Heart left ventricle (tissue), 16 donors: ENCODE measurements at regions of chr3 and their contacts with region 1.

Region 1: GRCh38 chr3:33798411-33799201 is at the start of gene PDCD6IP:
- DNase-seq: peak; percentile 93 to 98 (median 95)
- ATAC-seq: peak; percentile 93 to 96 (median 96)
- H3K4me3 ChIP-seq: peak within 1 kb of the TSS; percentile 56 to 98 (median 86)
- H3K27ac ChIP-seq: peak within 1 kb of the TSS; percentile 56 to 98 (median 94)
- H3K4me1 ChIP-seq: peaks cover 3 to 53% (median 39%) of the 10 kb centered on the region in 12 donors
- H3K27me3 ChIP-seq: no peaks in the 10 kb centered on the region
- CTCF ChIP-seq: peak in 6 of 12 donors; percentile 9 to 37 (median 25)
- POLR2A ChIP-seq: peak; percentile 38 to 85
- total RNA-seq, gene PDCD6IP: 72.9 to 205 (median 152) TPM

Region 2: GRCh38 chr3:33113772-33114621 is 684.6 kb before region 1 on chr3 and contains the start of gene CRTAP:
- intact Hi-C with region 1: loop called in 1 of 10 experiments (anchors 10 kb)
- DNase-seq: peak; percentile 95 to 99 (median 98)
- ATAC-seq: peak; percentile 93 to 96 (median 96)
- H3K4me3 ChIP-seq: peak within 1 kb of the TSS; percentile 57 to 98 (median 86)
- H3K27ac ChIP-seq: peak within 1 kb of the TSS; percentile 80 to 99 (median 97)
- H3K4me1 ChIP-seq: peaks cover 0 to 44% (median 21%) of the 10 kb centered on the region in 12 donors
- H3K27me3 ChIP-seq: no peaks in the 10 kb centered on the region
- CTCF ChIP-seq: peak in 4 of 12 donors; percentile 3 to 30 (median 8)
- POLR2A ChIP-seq: peak in 1 of 2 donors; percentile 28
- total RNA-seq, gene CRTAP: 62.6 to 148 (median 92.7) TPM

Region 3: GRCh38 chr3:33440323-33441232 is 358.0 kb before region 1 on chr3 and contains the start of gene UBP1:
- intact Hi-C with region 1: loop called in 2 of 10 experiments (anchors 10 kb)
- DNase-seq: peak; percentile 100
- ATAC-seq: peak; percentile 95 to 97 (median 96)
- H3K4me3 ChIP-seq: peak within 1 kb of the TSS; percentile 47 to 97 (median 78)
- H3K27ac ChIP-seq: peak within 1 kb of the TSS; percentile 93 to 100 (median 97)
- H3K4me1 ChIP-seq: peaks cover 5 to 45% (median 36%) of the 10 kb centered on the region in 12 donors
- H3K27me3 ChIP-seq: no peaks in the 10 kb centered on the region
- CTCF ChIP-seq: peak in 2 of 12 donors; percentile 5 to 24
- POLR2A ChIP-seq: peak in 1 of 2 donors; percentile 80
- total RNA-seq, gene UBP1: 33.0 to 53.5 (median 46.6) TPM